SK-N-SH (cell line): ENCODE measurements at regions of chr1 and their contacts with region 1.

Region 1: DNA sequence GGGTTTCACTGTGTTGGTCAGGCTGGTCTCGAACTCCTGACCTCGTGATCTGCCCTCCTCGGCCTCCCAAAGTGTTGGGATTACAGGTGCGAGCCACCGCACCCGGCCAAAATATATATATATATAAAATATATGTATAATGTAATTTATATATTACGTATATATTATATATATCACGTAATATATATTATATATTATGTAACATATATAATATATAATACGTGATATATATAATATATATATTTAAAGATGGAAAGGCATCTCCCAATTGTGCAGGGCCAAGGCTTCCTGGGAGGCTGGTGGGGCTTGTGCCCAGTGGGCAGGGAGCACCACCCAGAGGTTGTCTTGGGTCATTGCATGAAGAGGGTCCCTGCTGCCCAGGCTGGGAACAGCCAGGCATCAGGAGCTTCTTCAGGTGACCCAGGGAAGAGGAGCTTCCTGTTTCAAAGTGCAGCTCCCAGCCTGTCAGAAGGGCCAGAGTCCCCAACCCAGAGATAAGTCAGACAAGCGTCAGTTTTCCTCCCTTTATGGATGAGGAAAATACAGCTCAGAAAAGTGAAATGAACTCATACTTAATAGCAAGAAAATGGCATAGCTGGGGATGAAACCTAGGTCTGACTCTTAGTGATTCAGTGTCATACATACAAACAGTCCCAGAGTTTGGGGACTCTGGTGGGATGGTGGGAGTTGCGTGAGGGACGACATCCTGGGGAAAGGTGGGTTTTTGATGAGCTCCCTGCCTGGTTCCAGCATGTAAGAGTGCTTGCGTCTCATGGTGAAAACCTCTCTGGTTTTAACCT is 12.0 kb downstream of the UBE2Q1 start:
- DNase-seq: peak; percentile 88
- H3K4me3 ChIP-seq: no peak overlapping the region; a peak in 1 of 4 replicates
- H3K27ac ChIP-seq: peak overlapping the region in 1 of 2 experiments; percentile 78; a peak in 2 of 4 replicates
- H3K4me1 ChIP-seq: peaks cover 0 to 22% of the 10 kb centered on the region in 2 experiments; a peak in 1 of 4 replicates
- H3K27me3 ChIP-seq: peaks cover 2% of the 10 kb centered on the region; the same call in 1 of the 2 replicates
- CTCF ChIP-seq: peak; percentile 69
- EP300 ChIP-seq: no peak
- RAD21 ChIP-seq: peak; percentile 89

Region 2: GRCh38 chr1:154463512-154463990 is 82.9 kb before region 1 on chr1:
- CTCF ChIA-PET with region 1: interaction called, 10 read pairs
- POLR2A ChIA-PET with region 1: no interaction called
- DNase-seq: no peak
- H3K4me3 ChIP-seq: no peak overlapping the region
- H3K27ac ChIP-seq: peak overlapping the region; percentile 47 to 76; a peak in 3 of 4 replicates
- H3K4me1 ChIP-seq: peaks cover 7 to 8% of the 10 kb centered on the region in 2 experiments; a peak in 2 of 4 replicates
- H3K27me3 ChIP-seq: no peaks in the 10 kb centered on the region
- CTCF ChIP-seq: no peak
- EP300 ChIP-seq: no peak
- RAD21 ChIP-seq: no peak

Region 3: GRCh38 chr1:154490317-154490716 is 56.1 kb before region 1 on chr1:
- CTCF ChIA-PET with region 1: interaction called, 187 read pairs
- POLR2A ChIA-PET with region 1: no interaction called
- DNase-seq: no peak
- H3K4me3 ChIP-seq: no peak overlapping the region
- H3K27ac ChIP-seq: no peak overlapping the region
- H3K4me1 ChIP-seq: peaks cover 0 to 5% of the 10 kb centered on the region in 2 experiments; a peak in 1 of 4 replicates
- H3K27me3 ChIP-seq: peaks cover 48% of the 10 kb centered on the region; the same call in 1 of the 2 replicates
- CTCF ChIP-seq: no peak
- EP300 ChIP-seq: no peak
- RAD21 ChIP-seq: no peak

Region 4: GRCh38 chr1:154521695-154522094 is 24.8 kb before region 1 on chr1:
- CTCF ChIA-PET with region 1: interaction called, 11 read pairs
- POLR2A ChIA-PET with region 1: no interaction called
- DNase-seq: no peak
- H3K4me3 ChIP-seq: no peak overlapping the region
- H3K27ac ChIP-seq: no peak overlapping the region
- H3K4me1 ChIP-seq: no peaks in the 10 kb centered on the region
- H3K27me3 ChIP-seq: peaks cover 15% of the 10 kb centered on the region; the same call in 1 of the 2 replicates
- CTCF ChIP-seq: no peak
- EP300 ChIP-seq: no peak
- RAD21 ChIP-seq: no peak

Region 5: GRCh38 chr1:154533952-154534844 is 12.3 kb before region 1 on chr1:
- CTCF ChIA-PET with region 1: interaction called, 32 read pairs
- POLR2A ChIA-PET with region 1: no interaction called
- DNase-seq: peak; percentile 71
- H3K4me3 ChIP-seq: no peak overlapping the region
- H3K27ac ChIP-seq: no peak overlapping the region
- H3K4me1 ChIP-seq: no peaks in the 10 kb centered on the region
- H3K27me3 ChIP-seq: no peaks in the 10 kb centered on the region; the same call in 1 of the 2 replicates
- CTCF ChIP-seq: peak; percentile 50
- EP300 ChIP-seq: no peak
- RAD21 ChIP-seq: peak; percentile 71

Region 6: GRCh38 chr1:154558575-154559465 is 12.4 kb after region 1 on chr1 and contains the start of gene UBE2Q1:
- CTCF ChIA-PET with region 1: interaction called, 24 read pairs
- POLR2A ChIA-PET with region 1: interaction called, 4 read pairs
- DNase-seq: peak; percentile 98
- H3K4me3 ChIP-seq: peak within 1 kb of the TSS; percentile 87 to 94
- H3K27ac ChIP-seq: peak within 1 kb of the TSS; percentile 75 to 96
- H3K4me1 ChIP-seq: peaks cover 7 to 32% of the 10 kb centered on the region in 2 experiments; a peak in 2 of 4 replicates
- H3K27me3 ChIP-seq: no peaks in the 10 kb centered on the region
- CTCF ChIP-seq: no peak
- EP300 ChIP-seq: peak; percentile 36 to 51; a peak in 2 of 4 replicates
- RAD21 ChIP-seq: no peak
- polyA plus RNA-seq, gene UBE2Q1: 12.5 and 15.2 TPM in 2 replicates

Region 7: DNA sequence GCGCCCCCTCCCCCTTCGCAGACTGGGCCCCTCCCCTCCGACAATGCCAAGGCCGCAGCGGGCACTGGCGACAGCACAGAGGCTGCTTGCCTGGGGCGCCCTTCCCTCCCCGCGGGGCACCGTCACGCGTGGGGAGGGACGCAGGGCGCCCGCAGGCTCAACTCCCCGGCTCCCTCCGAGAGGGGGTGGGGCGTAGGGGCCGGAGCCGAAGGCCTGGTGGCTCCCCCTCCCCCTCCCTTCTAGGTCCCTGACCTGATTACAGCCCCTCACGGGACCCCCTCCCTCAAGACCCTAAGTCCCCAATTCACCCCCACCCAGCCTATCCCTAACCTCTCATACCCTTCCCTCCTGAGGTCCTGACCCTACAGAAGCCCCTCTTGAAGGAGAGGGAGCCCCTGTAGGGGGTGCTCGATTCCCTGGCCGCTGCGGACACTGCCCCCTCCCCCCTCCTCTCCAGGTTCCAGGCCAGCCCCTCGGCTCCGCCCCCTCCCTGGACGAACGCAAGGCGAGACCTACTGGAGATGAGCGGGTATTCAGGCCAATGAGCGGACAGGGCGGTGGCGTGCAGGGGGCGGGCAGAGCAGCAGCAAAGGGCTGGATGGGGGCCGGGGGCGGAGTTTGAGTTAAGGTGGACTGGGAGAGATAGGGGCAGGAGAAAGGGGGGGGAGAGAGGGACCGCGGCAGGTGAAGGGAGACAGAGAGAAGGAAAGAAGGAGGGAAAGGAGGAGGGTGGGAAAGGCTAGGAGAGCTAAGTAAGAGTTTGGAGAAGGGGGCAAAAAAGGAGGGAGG is 455.4 kb after region 1 on chr1:
- CTCF ChIA-PET with region 1: no interaction called
- POLR2A ChIA-PET with region 1: no interaction called
- DNase-seq: peak; percentile 96
- H3K4me3 ChIP-seq: peak overlapping the region; percentile 57 to 71
- H3K27ac ChIP-seq: peak overlapping the region; percentile 92 to 96
- H3K4me1 ChIP-seq: peaks cover 19 to 33% of the 10 kb centered on the region in 2 experiments
- H3K27me3 ChIP-seq: no peaks in the 10 kb centered on the region
- CTCF ChIP-seq: peak; percentile 69
- EP300 ChIP-seq: no peak
- RAD21 ChIP-seq: no peak